Activated T-helper 2 cell treated with anti-CD3 and anti-CD28 coated beads, Interferon-gamma antibody, Interleukin-2, Interleukin-4, amounts not matched to agents 10 μg/mL and 5 μg/mL and 100 μg/mL, durations not matched to agents 14 hours and 24 hours and 36 hours (primary cell): ENCODE measurements at regions of chr5 and their contacts with region 1.

Region 1: GRCh38 chr5:148482691-148483462 is 99.1 kb downstream of the FBXO38 start:
- DNase-seq: peak; percentile 41
- H3K4me3 Mint-ChIP-seq: no peak overlapping the region
- H3K27ac Mint-ChIP-seq: no peak overlapping the region
- H3K4me1 Mint-ChIP-seq: peaks cover 5% of the 10 kb centered on the region
- H3K27me3 Mint-ChIP-seq: peaks cover 37% of the 10 kb centered on the region

Region 2: GRCh38 chr5:148443998-148444397 is 38.9 kb before region 1 on chr5:
- intact Hi-C with region 1: loop called (anchors 2 kb)
- DNase-seq: peak; percentile 15
- H3K4me3 Mint-ChIP-seq: no peak overlapping the region
- H3K27ac Mint-ChIP-seq: no peak overlapping the region
- H3K4me1 Mint-ChIP-seq: peaks cover 2% of the 10 kb centered on the region
- H3K27me3 Mint-ChIP-seq: no peaks in the 10 kb centered on the region

Region 3: DNA sequence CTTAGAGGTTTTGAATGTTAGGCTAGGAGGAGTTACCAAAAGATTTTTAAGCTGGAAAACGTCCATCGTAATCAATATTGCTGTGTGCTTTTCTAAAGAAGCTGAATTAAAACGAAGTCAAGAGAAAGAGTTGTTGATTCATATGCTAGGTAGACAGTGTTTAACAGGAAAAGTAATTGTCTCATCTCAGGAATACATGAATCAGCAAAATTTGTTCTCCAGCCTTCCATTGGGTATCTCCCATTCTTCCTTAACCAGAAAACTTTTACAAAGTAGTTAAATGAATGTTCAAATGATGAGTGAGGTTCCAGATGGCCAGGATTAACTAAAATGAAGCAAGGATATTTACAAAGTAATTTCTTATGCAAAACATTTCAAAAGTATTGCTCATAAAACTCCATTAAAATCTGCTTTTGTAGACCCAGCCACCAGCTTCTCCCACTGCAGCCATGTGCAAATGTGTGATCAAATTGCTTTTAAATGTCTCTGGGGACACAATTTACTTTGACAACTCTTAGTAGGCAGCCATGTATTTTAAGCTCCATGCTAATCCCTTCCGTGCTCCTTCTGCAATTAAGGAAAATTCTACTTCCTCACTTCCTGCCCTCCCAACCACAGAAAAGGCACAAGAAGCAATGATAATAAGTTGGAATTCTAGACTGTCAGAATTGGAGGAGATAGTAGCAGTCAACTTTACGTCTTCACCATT is 50.2 kb after region 1 on chr5:
- intact Hi-C with region 1: no loop called
- DNase-seq: no peak
- H3K4me3 Mint-ChIP-seq: no peak overlapping the region
- H3K27ac Mint-ChIP-seq: no peak overlapping the region
- H3K4me1 Mint-ChIP-seq: no peaks in the 10 kb centered on the region
- H3K27me3 Mint-ChIP-seq: peaks cover 4% of the 10 kb centered on the region

Region 4: GRCh38 chr5:148725677-148726076 is 242.8 kb after region 1 on chr5:
- intact Hi-C with region 1: no loop called
- DNase-seq: no peak
- H3K4me3 Mint-ChIP-seq: no peak overlapping the region
- H3K27ac Mint-ChIP-seq: no peak overlapping the region
- H3K4me1 Mint-ChIP-seq: no peaks in the 10 kb centered on the region
- H3K27me3 Mint-ChIP-seq: peaks cover 25% of the 10 kb centered on the region